Adrenal gland (tissue), 19 donors: ENCODE measurements at regions of chr13 and their contacts with region 1.

Region 1: DNA sequence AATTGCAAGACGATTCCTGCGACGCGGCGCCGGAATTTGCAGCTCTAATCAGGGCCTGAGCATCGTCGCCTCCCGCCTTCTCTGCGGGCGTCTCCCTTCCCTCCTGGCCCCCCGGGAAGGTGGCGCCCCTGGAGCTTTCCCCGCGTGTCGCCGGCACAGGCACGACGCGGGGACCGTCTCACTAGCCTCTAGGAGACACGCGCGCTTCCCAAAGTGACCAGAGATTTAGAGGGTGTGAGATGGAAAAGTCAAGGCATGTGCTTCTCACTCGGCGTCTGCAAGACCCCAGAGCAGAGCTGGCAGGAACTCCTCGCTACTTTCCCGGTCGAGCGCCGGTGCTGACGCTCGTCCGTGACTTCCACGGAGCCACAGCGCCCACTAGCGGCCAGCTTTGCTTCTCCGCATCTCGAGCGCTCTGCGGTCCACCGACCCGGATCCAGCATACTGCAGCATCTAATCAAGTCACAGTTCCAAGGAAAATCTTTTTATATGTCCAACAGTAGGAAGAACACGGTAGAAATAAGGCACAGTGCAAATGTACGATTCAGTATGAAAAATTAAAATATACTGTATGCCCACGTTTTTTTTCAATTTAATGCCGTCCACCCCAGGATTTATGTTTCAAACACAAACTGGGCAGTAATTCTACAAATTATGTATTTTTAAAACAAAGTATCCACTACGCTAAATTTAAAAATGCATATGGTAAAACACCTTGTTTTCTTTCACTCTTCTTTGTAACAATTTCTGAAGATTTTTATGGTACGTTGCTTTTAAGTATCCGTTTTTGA is 977 bp upstream of the EFNB2 start:
- DNase-seq: peak; percentile 76 to 95 (median 92)
- H3K4me3 ChIP-seq: peak overlapping the region in 3 of 4 donors; percentile 40 to 73 (median 62)
- H3K27ac ChIP-seq: peak overlapping the region in 3 of 5 donors; percentile 43 to 66 (median 59)
- H3K4me1 ChIP-seq: peaks cover 14 to 29% of the 10 kb centered on the region in 2 donors
- H3K27me3 ChIP-seq: peaks cover 9% of the 10 kb centered on the region
- CTCF ChIP-seq: peak; percentile 85 to 98 (median 94)
- POLR2A ChIP-seq: no peak

Region 2: GRCh38 chr13:106619688-106620555 is 83.5 kb after region 1 on chr13:
- intact Hi-C with region 1: loop called (anchors 5 to 10 kb)
- DNase-seq: peak in 6 of 7 donors; percentile 52 to 67 (median 62)
- H3K4me3 ChIP-seq: peak overlapping the region in 1 of 4 donors; percentile 19
- H3K27ac ChIP-seq: peak overlapping the region in 3 of 5 donors; percentile 11 to 42 (median 22)
- H3K4me1 ChIP-seq: peaks cover 13% of the 10 kb centered on the region in 2 donors
- H3K27me3 ChIP-seq: no peaks in the 10 kb centered on the region
- CTCF ChIP-seq: peak; percentile 54 to 81 (median 76)
- POLR2A ChIP-seq: no peak